ENCODE measurements at regions of chr6 and their contacts with region 1.

Region 1: GRCh38 chr6:2952557-2953095 is 18.7 kb downstream of the SERPINB6 start:
- DNase-seq: no peak

Region 2: DNA sequence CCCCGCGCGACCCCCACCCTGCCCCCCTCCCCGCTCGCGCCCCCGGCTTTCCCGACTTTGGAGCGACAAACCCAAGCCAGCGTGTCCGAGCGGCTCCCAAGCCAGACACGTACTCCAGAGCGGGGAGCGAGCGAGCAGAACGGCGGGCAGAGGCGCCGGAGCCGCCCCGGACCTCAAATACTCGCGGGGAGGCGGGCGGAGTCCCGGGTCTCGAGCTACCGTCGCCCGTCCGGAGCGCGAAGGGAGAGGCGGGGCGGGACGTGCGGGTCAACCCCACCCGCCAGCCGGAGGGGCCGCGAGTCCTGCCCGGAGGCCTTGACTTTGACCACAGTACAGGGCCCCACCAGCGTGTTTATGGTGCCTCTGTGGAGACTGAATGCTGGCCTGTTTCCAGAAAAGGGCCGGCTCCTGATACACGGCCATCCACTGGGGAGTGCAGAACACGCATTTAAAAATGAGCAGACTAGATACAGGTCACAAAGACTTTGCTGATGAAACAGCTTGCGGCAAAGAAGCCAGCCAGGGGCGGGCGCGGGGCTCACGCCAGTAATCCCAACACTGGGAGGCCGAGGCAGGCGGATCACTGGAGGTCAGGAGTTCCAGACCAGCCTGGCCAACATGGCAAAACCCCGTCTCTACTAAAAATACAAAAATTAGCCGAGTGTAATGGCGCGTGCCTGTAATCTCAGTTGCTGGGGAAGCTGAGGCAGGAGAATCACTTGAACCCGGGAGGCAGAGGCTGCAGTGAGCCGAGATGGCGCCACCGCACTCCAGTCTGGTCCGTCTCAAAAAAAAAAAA is 19.0 kb after region 1 on chr6 and contains the start of gene SERPINB6:
- intact Hi-C with region 1: loop called (anchors 2 kb)
- DNase-seq: peak; percentile 91
- total RNA-seq, gene SERPINB6: 171 TPM

Measured in cardiac septum (tissue), 1 donor.